Activated B cell treated with CpG ODN at 0.5 μM for 24 hours (primary cell): ENCODE measurements at regions of chr1 and their contacts with region 1.

Region 1: GRCh38 chr1:107804134-107804533 is 160.8 kb downstream of the VAV3 start:
- DNase-seq: no peak
- ATAC-seq: peak; percentile 35
- H3K4me3 Mint-ChIP-seq: peak overlapping the region; percentile 80
- H3K27ac Mint-ChIP-seq: peak overlapping the region; percentile 96
- H3K4me1 Mint-ChIP-seq: peaks cover 94% of the 10 kb centered on the region
- H3K27me3 Mint-ChIP-seq: no peaks in the 10 kb centered on the region
- CTCF ChIP-seq: no peak

Region 2: GRCh38 chr1:107820805-107821204 is 16.7 kb after region 1 on chr1:
- CTCF ChIA-PET with region 1: no interaction called
- POLR2A ChIA-PET with region 1: interaction called, 6 read pairs
- intact Hi-C with region 1: loop called (anchors 2 kb)
- DNase-seq: no peak
- ATAC-seq: peak; percentile 69
- H3K4me3 Mint-ChIP-seq: no peak overlapping the region
- H3K27ac Mint-ChIP-seq: peak overlapping the region; percentile 77
- H3K4me1 Mint-ChIP-seq: peaks cover 67% of the 10 kb centered on the region
- H3K27me3 Mint-ChIP-seq: no peaks in the 10 kb centered on the region
- CTCF ChIP-seq: no peak

Region 3: GRCh38 chr1:107829061-107830040 is 25.2 kb after region 1 on chr1:
- CTCF ChIA-PET with region 1: no interaction called
- POLR2A ChIA-PET with region 1: interaction called, 6 read pairs
- intact Hi-C with region 1: loop called (anchors 2 kb)
- DNase-seq: no peak
- ATAC-seq: peak; percentile 80
- H3K4me3 Mint-ChIP-seq: peak overlapping the region; percentile 65
- H3K27ac Mint-ChIP-seq: peak overlapping the region; percentile 89
- H3K4me1 Mint-ChIP-seq: peaks cover 89% of the 10 kb centered on the region
- H3K27me3 Mint-ChIP-seq: no peaks in the 10 kb centered on the region
- CTCF ChIP-seq: no peak